Ovary (tissue), 10 donors: ENCODE measurements at regions of chr1 and their contacts with region 1.

Region 1: GRCh38 chr1:58783993-58784757 is at the start of gene JUN:
- DNase-seq: peak; percentile 100
- H3K4me3 ChIP-seq: peak within 1 kb of the TSS; percentile 89
- H3K27ac ChIP-seq: peak within 1 kb of the TSS; percentile 93 to 99
- H3K4me1 ChIP-seq: peaks cover 1% of the 10 kb centered on the region
- H3K27me3 ChIP-seq: no peaks in the 10 kb centered on the region
- CTCF ChIP-seq: peak in 1 of 3 donors; percentile 9
- EP300 ChIP-seq: peak; percentile 80
- POLR2A ChIP-seq: peak; percentile 81
- total RNA-seq, gene JUN: 50.7 to 740 (median 155) TPM

Region 2: GRCh38 chr1:58823481-58824010 is 39.4 kb after region 1 on chr1:
- intact Hi-C with region 1: no loop called
- DNase-seq: no peak
- H3K4me3 ChIP-seq: no peak overlapping the region
- H3K27ac ChIP-seq: no peak overlapping the region
- H3K4me1 ChIP-seq: peaks cover 4% of the 10 kb centered on the region
- H3K27me3 ChIP-seq: no peaks in the 10 kb centered on the region
- CTCF ChIP-seq: no peak
- EP300 ChIP-seq: no peak
- POLR2A ChIP-seq: no peak

Region 3: GRCh38 chr1:58896246-58897183 is 112.3 kb after region 1 on chr1:
- intact Hi-C with region 1: loop called in 2 of 4 experiments (anchors 5 to 10 kb)
- DNase-seq: peak in 2 of 5 donors; percentile 27 to 59
- H3K4me3 ChIP-seq: no peak overlapping the region
- H3K27ac ChIP-seq: peak overlapping the region in 1 of 2 donors; percentile 14
- H3K4me1 ChIP-seq: peaks cover 26% of the 10 kb centered on the region
- H3K27me3 ChIP-seq: no peaks in the 10 kb centered on the region
- CTCF ChIP-seq: no peak
- EP300 ChIP-seq: no peak
- POLR2A ChIP-seq: no peak

Region 4: DNA sequence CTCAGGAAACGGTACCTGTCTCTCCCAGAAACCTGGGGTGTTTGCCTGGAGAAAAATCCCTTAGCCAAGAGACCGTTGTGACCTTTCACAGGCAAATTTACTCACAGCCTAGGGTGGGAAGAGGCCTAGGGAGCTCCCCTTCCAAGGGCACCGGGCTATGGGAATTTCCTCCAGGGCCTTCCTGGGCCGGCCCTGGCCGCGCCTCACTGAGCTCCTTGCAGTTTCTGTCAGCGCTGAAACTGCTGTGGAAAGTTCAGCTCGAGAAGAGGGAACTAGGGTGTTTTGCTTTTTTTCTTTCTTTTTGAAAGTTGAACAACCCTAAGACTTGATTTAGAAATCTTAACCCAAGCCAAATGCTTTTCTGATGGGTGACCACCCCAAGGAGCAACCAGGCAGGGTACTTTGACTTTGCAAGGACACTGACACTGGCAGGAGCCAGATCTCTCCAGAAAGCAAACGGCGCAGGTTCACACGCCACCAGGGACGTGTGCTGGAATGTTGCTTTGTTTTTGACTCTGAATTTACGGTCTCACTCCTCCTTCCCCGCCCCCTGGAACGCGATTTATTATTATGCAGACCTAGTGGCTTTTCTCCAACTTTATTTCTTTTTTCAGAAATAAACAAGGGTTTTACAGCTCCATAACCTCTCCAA is 229.2 kb after region 1 on chr1:
- intact Hi-C with region 1: loop called in 1 of 4 experiments (anchors 5 kb)
- DNase-seq: peak; percentile 52 to 70 (median 55)
- H3K4me3 ChIP-seq: peak overlapping the region; percentile 22
- H3K27ac ChIP-seq: peak overlapping the region; percentile 81 to 82
- H3K4me1 ChIP-seq: peaks cover 11% of the 10 kb centered on the region
- H3K27me3 ChIP-seq: no peaks in the 10 kb centered on the region
- CTCF ChIP-seq: no peak
- EP300 ChIP-seq: no peak
- POLR2A ChIP-seq: no peak

Region 5: GRCh38 chr1:59150577-59151391 is 366.6 kb after region 1 on chr1:
- intact Hi-C with region 1: loop called in 1 of 4 experiments (anchors 10 kb)
- DNase-seq: peak; percentile 74 to 90 (median 84)
- H3K4me3 ChIP-seq: no peak overlapping the region
- H3K27ac ChIP-seq: peak overlapping the region in 1 of 2 donors; percentile 55
- H3K4me1 ChIP-seq: peaks cover 4% of the 10 kb centered on the region
- H3K27me3 ChIP-seq: no peaks in the 10 kb centered on the region
- CTCF ChIP-seq: peak in 1 of 3 donors; percentile 15
- EP300 ChIP-seq: peak; percentile 72
- POLR2A ChIP-seq: no peak

Region 6: DNA sequence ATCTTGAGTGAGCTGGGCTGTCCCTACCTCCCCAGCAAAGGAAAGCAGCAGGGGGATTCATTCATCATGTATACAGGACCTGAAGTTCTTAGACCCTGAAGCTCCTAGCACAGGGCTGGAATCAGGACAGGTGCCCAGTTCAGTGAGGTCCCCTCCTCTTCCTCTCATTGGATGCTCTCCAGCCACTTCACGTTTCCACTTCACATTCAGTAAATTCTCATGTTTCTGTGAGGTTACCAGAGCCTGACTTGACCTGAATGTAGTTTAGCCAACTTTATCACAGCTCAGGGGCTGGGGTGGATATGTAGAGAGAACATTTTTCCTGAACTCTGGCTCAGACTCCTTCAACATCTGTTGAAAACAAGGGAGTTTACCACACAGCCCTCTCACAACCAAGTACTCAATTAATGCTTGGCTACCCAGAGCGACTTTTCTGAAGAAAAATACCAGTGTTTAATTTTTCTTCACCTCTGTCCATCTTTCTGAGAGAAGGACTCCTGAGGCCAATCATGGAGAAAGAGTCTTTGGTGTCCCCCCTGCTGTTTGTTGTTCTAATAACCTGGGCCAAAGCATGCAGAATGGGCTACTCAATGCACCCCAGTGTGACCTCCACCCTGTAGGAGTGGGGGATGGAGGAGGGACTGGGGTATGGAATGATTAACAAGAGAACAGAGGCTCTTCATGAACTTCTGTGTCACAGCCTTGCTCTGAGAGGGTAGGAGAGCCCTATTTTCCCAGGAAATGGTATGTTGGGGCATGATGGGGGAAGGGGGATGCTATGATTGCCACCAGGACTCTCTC is 404.4 kb after region 1 on chr1:
- intact Hi-C with region 1: no loop called
- DNase-seq: peak in 1 of 5 donors; percentile 21
- H3K4me3 ChIP-seq: no peak overlapping the region
- H3K27ac ChIP-seq: no peak overlapping the region
- H3K4me1 ChIP-seq: peaks cover 9% of the 10 kb centered on the region
- H3K27me3 ChIP-seq: no peaks in the 10 kb centered on the region
- CTCF ChIP-seq: no peak
- EP300 ChIP-seq: no peak
- POLR2A ChIP-seq: no peak

Region 7: GRCh38 chr1:59699227-59699847 is 915.2 kb after region 1 on chr1:
- intact Hi-C with region 1: loop called in 2 of 4 experiments (anchors 5 to 10 kb)
- DNase-seq: peak in 1 of 5 donors; percentile 34
- H3K4me3 ChIP-seq: no peak overlapping the region
- H3K27ac ChIP-seq: no peak overlapping the region
- H3K4me1 ChIP-seq: peaks cover 3% of the 10 kb centered on the region
- H3K27me3 ChIP-seq: no peaks in the 10 kb centered on the region
- CTCF ChIP-seq: peak; percentile 75 to 92 (median 86)
- EP300 ChIP-seq: no peak
- POLR2A ChIP-seq: no peak